Activated T-helper 1 cell treated with anti-CD3 and anti-CD28 coated beads, Interleukin-12 subunit alpha, Interleukin-12 subunit beta, Interleukin-2, Interleukin-4 antibody, amounts not matched to agents 30 ng/mL and 10 ng/mL and 1 ng/mL, durations not matched to agents 14 hours and 24 hours and 36 hours (primary cell): ENCODE measurements at regions of chr6 and their contacts with region 1.

Region 1: DNA sequence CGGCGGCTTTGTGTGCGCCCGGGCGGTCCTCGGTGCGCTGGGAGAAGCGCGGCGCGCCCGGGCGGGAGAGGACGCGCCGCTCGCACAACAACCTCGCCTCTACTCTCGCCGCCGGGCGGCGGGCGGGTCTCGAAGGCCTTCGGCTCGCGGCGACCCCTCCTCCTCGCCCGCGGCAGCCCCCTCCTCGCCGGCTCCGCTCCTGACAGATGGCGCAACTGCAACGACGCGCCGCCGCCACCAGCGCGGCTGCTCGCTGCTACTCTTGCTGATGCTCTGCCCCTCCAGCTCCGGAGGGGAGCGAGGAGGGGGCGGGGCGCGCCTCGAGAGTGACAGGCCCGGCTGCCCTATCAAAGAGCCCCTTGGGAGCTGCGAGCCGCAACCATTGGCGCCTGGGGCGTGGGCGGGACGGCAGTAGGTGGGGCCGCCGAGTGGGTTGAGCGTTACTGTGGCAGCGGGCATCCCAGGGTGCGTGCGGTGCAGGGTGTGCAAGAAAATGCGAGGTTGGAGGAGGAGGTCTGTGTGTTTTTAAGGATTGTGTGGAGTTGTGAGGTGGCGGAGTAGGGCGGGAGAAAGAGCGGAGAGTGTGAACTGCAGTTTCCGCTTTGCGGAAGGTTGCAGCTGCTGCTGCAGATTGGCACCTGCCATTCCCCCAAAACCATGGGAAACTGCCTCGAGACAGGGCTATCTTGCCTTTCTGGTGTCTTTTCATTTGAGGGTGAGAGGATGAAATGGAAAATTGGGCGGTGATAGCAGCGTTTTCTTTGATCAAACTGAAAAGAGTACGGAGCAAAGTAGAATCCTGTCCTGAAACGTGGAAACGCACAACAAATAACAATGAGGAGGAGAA is at the start of gene FYN:
- DNase-seq: peak; percentile 98
- H3K4me3 Mint-ChIP-seq: peak within 1 kb of the TSS; percentile 99
- H3K27ac Mint-ChIP-seq: peak within 1 kb of the TSS; percentile 96
- H3K4me1 Mint-ChIP-seq: peaks cover 44% of the 10 kb centered on the region
- H3K27me3 Mint-ChIP-seq: peaks cover 6% of the 10 kb centered on the region
- total RNA-seq, gene FYN: 347 and 355 TPM in 2 replicates

Region 2: GRCh38 chr6:111605100-111605751 is 268.2 kb before region 1 on chr6:
- intact Hi-C with region 1: loop called (anchors 5 kb)
- DNase-seq: peak; percentile 11
- H3K4me3 Mint-ChIP-seq: peak overlapping the region; percentile 90
- H3K27ac Mint-ChIP-seq: peak overlapping the region; percentile 100
- H3K4me1 Mint-ChIP-seq: peaks cover 56% of the 10 kb centered on the region
- H3K27me3 Mint-ChIP-seq: no peaks in the 10 kb centered on the region

Region 3: GRCh38 chr6:111764238-111765175 is 108.9 kb before region 1 on chr6:
- intact Hi-C with region 1: loop called (anchors 1 kb)
- DNase-seq: peak; percentile 41
- H3K4me3 Mint-ChIP-seq: peak overlapping the region; percentile 74
- H3K27ac Mint-ChIP-seq: peak overlapping the region; percentile 90
- H3K4me1 Mint-ChIP-seq: peaks cover 100% of the 10 kb centered on the region
- H3K27me3 Mint-ChIP-seq: no peaks in the 10 kb centered on the region

Region 4: DNA sequence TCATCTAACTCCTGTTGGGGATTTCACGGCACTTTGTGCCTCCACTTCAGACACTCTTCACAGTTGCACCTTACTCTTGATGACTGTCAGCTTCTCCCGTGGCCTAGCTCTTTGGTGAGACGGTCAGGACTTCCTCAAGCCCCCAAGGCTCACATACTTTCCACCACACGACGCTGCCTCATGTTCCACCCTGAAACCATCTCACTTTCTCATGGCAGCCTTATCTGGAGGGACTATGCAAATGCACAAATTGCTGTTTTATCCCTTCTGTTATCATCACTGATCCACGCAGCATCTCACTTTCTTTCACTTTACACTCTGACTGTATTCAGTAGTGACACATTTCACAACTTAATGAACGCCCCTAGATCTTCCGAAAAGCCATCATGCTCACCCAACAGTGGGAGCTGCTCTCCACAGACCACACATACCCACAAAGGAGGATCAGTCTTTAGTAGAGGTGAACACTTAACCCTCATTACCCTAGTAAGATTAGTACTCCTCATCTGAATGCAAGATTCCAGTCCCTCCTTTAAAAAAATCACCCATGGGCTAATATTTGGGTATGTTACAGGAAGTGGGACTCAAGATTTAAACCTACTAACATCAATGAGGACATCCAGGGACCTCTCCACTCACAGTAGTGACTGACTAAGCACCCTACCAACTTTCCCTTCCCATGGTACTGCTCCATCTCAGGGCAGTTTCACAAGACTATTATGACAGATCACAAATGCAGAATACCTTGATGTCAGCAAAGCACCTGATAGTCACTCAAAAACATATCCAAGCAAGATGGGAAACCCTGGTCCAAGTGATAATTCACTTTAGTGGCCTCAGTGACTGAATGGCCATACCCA is 35.5 kb before region 1 on chr6:
- intact Hi-C with region 1: loop called (anchors 1 kb)
- DNase-seq: peak; percentile 60
- H3K4me3 Mint-ChIP-seq: peak overlapping the region; percentile 70
- H3K27ac Mint-ChIP-seq: peak overlapping the region; percentile 94
- H3K4me1 Mint-ChIP-seq: peaks cover 61% of the 10 kb centered on the region
- H3K27me3 Mint-ChIP-seq: no peaks in the 10 kb centered on the region

Region 5: GRCh38 chr6:111861431-111861885 is 11.9 kb before region 1 on chr6:
- intact Hi-C with region 1: no loop called
- DNase-seq: no peak
- H3K4me3 Mint-ChIP-seq: no peak overlapping the region
- H3K27ac Mint-ChIP-seq: peak overlapping the region; percentile 32
- H3K4me1 Mint-ChIP-seq: peaks cover 97% of the 10 kb centered on the region
- H3K27me3 Mint-ChIP-seq: no peaks in the 10 kb centered on the region

Region 6: GRCh38 chr6:111957623-111958315 is 84.4 kb after region 1 on chr6:
- intact Hi-C with region 1: no loop called
- DNase-seq: no peak
- H3K4me3 Mint-ChIP-seq: no peak overlapping the region
- H3K27ac Mint-ChIP-seq: no peak overlapping the region
- H3K4me1 Mint-ChIP-seq: peaks cover 5% of the 10 kb centered on the region
- H3K27me3 Mint-ChIP-seq: peaks cover 9% of the 10 kb centered on the region

Region 7: DNA sequence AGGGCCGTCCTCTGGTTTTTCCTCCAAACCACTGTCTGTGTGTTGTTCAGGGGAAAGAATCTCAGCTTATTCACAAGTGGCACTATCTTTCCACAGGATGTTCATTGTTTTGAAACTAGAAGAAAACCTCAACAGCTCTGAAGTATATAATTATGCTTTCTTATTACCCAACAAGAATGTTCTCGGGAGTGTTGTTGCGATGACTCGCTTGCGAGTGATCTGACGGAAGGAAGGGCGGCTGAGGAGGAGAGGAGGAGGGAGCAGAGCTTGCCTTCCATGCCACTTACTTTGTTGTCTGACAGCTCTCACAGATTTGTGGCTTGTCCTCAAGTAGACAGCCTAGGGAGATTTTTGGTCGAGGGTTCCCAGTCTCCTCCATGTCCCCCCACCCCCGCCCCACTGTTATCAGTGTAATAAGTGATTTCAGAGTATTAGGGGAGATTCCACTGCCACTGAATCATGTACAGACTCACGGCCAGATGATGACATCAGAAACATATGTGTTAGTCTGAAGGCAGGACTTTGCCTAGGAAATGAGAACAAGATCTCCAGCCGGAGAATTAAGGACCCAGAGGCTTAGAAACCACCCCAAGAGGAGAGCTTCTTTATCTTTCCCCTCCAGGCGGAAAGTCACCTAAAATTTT is 99.8 kb after region 1 on chr6:
- intact Hi-C with region 1: loop called (anchors 1 kb)
- DNase-seq: peak; percentile 47
- H3K4me3 Mint-ChIP-seq: peak overlapping the region; percentile 53
- H3K27ac Mint-ChIP-seq: peak overlapping the region; percentile 87
- H3K4me1 Mint-ChIP-seq: peaks cover 55% of the 10 kb centered on the region
- H3K27me3 Mint-ChIP-seq: no peaks in the 10 kb centered on the region

Region 8: GRCh38 chr6:113082745-113083144 is 1209.3 kb after region 1 on chr6:
- intact Hi-C with region 1: no loop called
- DNase-seq: no peak
- H3K4me3 Mint-ChIP-seq: no peak overlapping the region
- H3K27ac Mint-ChIP-seq: no peak overlapping the region
- H3K4me1 Mint-ChIP-seq: no peaks in the 10 kb centered on the region
- H3K27me3 Mint-ChIP-seq: no peaks in the 10 kb centered on the region